ENCODE measurements at regions of chr22 and their contacts with region 1.

Region 1: DNA sequence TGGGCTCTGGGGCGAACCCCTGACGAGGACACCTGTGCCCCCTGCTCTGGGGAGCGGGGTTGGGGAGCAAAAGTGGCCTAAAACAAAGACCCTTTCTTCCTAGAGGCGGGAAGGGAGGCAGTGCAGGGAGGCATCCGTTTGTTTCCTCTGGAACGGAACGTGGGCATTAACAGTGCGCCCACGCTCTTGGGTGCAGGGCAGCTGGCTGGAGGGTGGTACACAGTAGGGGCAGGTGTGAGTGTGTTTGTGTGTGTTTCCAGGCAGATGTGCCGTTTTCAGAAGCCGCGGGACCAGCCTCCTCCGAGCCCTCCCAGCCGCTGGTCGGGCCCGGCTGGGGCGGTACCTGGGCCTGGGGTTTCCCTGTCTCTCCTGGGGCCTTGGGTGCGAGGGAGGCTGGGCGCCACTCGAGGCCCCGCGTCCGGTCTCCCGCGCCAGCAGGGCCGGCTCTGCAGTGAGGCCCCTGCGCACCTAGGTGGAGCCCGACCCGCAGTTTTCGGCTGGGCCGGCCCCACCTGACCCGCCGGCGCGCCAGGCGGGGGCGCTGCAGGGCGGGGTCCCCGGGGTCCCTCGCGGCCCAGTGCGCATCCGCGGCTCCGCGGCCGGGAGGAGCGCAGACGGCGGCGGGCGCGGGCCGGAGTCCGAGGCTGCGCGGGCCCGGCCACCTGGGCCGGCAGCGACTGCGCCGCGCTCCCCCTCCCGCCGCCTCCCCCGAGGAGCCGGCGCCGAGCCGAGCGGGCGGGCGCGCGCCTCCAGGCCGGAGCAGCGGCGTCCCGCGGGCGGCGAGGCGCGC is 1252.7 kb downstream of the BRD1 start:
- DNase-seq: peak in 38 of 42 donors; percentile 49 to 89 (median 74)

Region 2: GRCh38 chr22:48702573-48703264 is 127.7 kb after region 1 on chr22:
- intact Hi-C with region 1: loop called (anchors 5 kb)
- DNase-seq: peak; percentile 68 to 94 (median 87)

Region 3: GRCh38 chr22:48782811-48783511 is 208.0 kb after region 1 on chr22:
- intact Hi-C with region 1: loop called (anchors 10 kb)
- DNase-seq: peak in 23 of 42 donors; percentile 21 to 81 (median 37)

Region 4: GRCh38 chr22:49026494-49027380 is 451.8 kb after region 1 on chr22:
- intact Hi-C with region 1: loop called (anchors 10 kb)
- DNase-seq: peak; percentile 26 to 87 (median 64)

Region 5: DNA sequence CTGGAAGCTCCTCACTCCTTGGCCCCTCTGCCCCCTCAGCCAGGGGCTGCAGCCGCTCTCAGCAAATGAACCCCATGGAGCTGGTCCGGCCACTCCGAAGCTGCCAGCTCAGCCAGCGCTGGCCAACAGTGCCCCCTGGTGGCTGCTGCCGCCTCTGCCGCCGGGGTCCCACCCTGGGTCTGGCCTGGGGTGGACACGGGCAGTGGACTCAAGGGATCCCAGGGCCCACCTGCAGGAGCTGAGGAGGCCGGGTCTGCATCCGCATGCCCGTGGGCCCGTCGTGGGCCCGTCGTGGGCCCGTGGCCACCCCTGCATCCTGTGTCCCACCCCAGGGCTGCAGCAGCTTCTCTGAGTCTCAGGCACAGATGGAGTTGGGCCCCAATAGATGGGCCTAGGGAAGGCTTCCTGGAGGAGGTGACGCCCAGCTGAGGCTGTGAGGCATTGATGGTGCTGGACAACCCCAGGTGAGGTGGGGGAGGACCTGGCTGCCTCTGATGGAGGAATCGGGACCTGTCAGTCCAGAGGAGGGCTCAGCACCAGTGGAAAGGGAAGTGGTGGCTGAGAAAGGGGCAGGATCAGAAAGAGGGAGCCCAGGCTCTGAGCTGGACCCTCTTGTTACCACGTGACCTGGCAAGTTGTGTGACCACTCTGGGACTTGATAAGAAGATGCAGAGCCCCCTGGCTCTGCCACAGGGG is 730.4 kb after region 1 on chr22:
- intact Hi-C with region 1: loop called (anchors 2 kb)
- DNase-seq: peak; percentile 55 to 93 (median 82)

Region 6: GRCh38 chr22:49632199-49633009 is 1057.4 kb after region 1 on chr22:
- intact Hi-C with region 1: loop called (anchors 10 kb)
- DNase-seq: peak; percentile 45 to 90 (median 78)